Caco-2 (cell line): ENCODE measurements at regions of chr6 and their contacts with region 1.

Region 1: GRCh38 chr6:9250852-9251251 is 815.5 kb upstream of the SLC35B3 start:
- DNase-seq: peak; percentile 75 to 76
- H3K4me3 ChIP-seq: no peak overlapping the region
- H3K4me3 Mint-ChIP-seq: peak overlapping the region; percentile 7
- H3K27ac Mint-ChIP-seq: no peak overlapping the region
- H3K4me1 ChIP-seq: peaks cover 27% of the 10 kb centered on the region
- H3K4me1 Mint-ChIP-seq: peaks cover 6% of the 10 kb centered on the region
- H3K27me3 ChIP-seq: no peaks in the 10 kb centered on the region
- H3K27me3 Mint-ChIP-seq: no peaks in the 10 kb centered on the region
- CTCF ChIP-seq: peak; percentile 59 to 86

Region 2: DNA sequence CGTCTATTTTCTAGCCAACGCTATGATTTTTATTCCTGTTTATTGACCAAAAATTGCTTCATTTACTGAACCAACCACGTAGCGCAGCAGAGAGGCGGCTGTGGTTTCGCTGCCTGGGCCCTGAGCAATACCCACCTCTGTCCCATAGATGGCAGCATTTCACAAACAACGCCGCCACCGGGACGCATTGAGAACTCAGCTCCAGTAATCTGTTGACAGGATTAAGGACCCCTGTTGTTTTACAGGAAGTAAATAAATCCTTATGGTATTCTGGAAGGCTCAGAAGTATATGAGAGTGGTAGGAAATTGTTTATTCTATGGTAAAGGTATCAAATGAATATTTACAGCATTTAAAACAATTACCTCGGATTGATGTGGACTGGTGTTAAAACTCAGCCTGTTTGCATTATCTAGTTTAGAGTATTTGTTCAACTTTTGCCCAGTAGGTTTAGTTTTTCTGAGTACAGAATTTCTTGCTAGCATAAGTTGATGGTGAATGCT is 267.6 kb before region 1 on chr6:
- CTCF ChIA-PET with region 1: interaction called, 3 read pairs
- POLR2A ChIA-PET with region 1: no interaction called
- intact Hi-C with region 1: loop called (anchors 2 kb)
- DNase-seq: peak; percentile 55 to 74
- H3K4me3 ChIP-seq: no peak overlapping the region
- H3K4me3 Mint-ChIP-seq: no peak overlapping the region
- H3K27ac Mint-ChIP-seq: no peak overlapping the region
- H3K4me1 ChIP-seq: peaks cover 10% of the 10 kb centered on the region; the same call in 1 of the 2 replicates
- H3K4me1 Mint-ChIP-seq: peaks cover 7% of the 10 kb centered on the region
- H3K27me3 ChIP-seq: no peaks in the 10 kb centered on the region
- H3K27me3 Mint-ChIP-seq: no peaks in the 10 kb centered on the region
- CTCF ChIP-seq: peak; percentile 87 to 90

Region 3: GRCh38 chr6:9178071-9178470 is 72.8 kb before region 1 on chr6:
- CTCF ChIA-PET with region 1: no interaction called
- POLR2A ChIA-PET with region 1: no interaction called
- intact Hi-C with region 1: no loop called
- DNase-seq: no peak
- H3K4me3 ChIP-seq: no peak overlapping the region
- H3K4me3 Mint-ChIP-seq: no peak overlapping the region
- H3K27ac Mint-ChIP-seq: no peak overlapping the region
- H3K4me1 ChIP-seq: no peaks in the 10 kb centered on the region
- H3K4me1 Mint-ChIP-seq: no peaks in the 10 kb centered on the region
- H3K27me3 ChIP-seq: no peaks in the 10 kb centered on the region
- H3K27me3 Mint-ChIP-seq: peaks cover 2% of the 10 kb centered on the region
- CTCF ChIP-seq: no peak

Region 4: GRCh38 chr6:9370480-9370879 is 119.6 kb after region 1 on chr6:
- CTCF ChIA-PET with region 1: no interaction called
- POLR2A ChIA-PET with region 1: no interaction called
- intact Hi-C with region 1: loop called (anchors 10 kb)
- DNase-seq: no peak
- H3K4me3 ChIP-seq: no peak overlapping the region
- H3K4me3 Mint-ChIP-seq: no peak overlapping the region
- H3K27ac Mint-ChIP-seq: no peak overlapping the region
- H3K4me1 ChIP-seq: no peaks in the 10 kb centered on the region
- H3K4me1 Mint-ChIP-seq: no peaks in the 10 kb centered on the region
- H3K27me3 ChIP-seq: no peaks in the 10 kb centered on the region; the same call in 1 of the 2 replicates
- H3K27me3 Mint-ChIP-seq: no peaks in the 10 kb centered on the region
- CTCF ChIP-seq: no peak

Region 5: GRCh38 chr6:9540534-9541126 is 289.8 kb after region 1 on chr6:
- CTCF ChIA-PET with region 1: no interaction called
- POLR2A ChIA-PET with region 1: no interaction called
- intact Hi-C with region 1: loop called (anchors 5 kb)
- DNase-seq: peak in 1 of 2 experiments; percentile 27
- H3K4me3 ChIP-seq: no peak overlapping the region
- H3K4me3 Mint-ChIP-seq: no peak overlapping the region
- H3K27ac Mint-ChIP-seq: no peak overlapping the region
- H3K4me1 ChIP-seq: peaks cover 17% of the 10 kb centered on the region
- H3K4me1 Mint-ChIP-seq: peaks cover 7% of the 10 kb centered on the region
- H3K27me3 ChIP-seq: no peaks in the 10 kb centered on the region
- H3K27me3 Mint-ChIP-seq: no peaks in the 10 kb centered on the region
- CTCF ChIP-seq: peak; percentile 34 to 38

Region 6: GRCh38 chr6:9851541-9852380 is 600.9 kb after region 1 on chr6:
- CTCF ChIA-PET with region 1: no interaction called
- POLR2A ChIA-PET with region 1: no interaction called
- intact Hi-C with region 1: loop called (anchors 2 kb)
- DNase-seq: peak; percentile 36 to 39
- H3K4me3 ChIP-seq: no peak overlapping the region
- H3K4me3 Mint-ChIP-seq: no peak overlapping the region
- H3K27ac Mint-ChIP-seq: no peak overlapping the region
- H3K4me1 ChIP-seq: no peaks in the 10 kb centered on the region
- H3K4me1 Mint-ChIP-seq: no peaks in the 10 kb centered on the region
- H3K27me3 ChIP-seq: no peaks in the 10 kb centered on the region
- H3K27me3 Mint-ChIP-seq: no peaks in the 10 kb centered on the region
- CTCF ChIP-seq: no peak